B cell (primary cell): ENCODE measurements at regions of chr2 and their contacts with region 1.

Region 1: DNA sequence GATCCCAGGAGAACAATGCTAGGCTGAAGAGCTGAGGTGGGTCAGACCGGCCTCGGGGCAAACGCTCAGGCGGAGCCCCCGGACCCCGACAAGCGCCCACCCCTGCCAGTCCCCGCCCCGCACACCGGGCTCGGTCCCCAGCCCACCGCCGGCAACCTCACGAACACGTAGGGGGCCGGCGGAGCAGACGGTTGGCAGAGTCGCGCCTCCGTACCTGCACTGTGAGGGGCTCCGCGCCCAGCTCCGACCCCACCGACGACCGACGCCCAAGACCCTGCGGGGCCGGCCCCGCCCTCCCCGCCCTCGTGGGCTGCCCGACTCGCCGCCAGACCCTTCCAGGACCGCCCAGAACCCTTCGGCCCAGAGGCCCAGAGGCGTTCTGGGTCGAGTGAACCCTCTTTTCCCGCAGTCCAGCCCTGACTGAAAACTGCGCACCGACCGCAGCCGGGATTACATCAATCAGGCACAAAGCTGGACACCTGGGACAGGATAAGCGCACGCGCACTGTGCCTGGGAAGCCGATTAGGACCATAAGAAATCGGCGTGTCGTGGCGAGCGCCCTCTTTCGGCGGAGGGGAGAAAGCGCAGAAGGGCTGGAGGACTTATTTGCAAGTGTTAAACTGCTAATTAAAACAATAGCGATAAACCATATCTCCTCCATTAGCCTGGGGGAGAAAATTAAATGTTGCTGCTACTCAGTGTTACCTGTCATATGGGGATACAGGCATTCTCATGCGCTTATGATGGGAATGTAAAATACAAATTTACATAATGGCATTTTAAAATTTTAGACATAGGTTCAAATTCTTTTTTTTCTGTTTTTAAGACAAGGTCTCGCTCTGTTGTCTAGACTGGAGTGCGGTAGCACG is 11.7 kb upstream of the DCTN1 start:
- DNase-seq: peak; percentile 98
- ATAC-seq: peak; percentile 89
- H3K4me3 ChIP-seq: peak overlapping the region; percentile 71 to 88 (median 80)
- H3K4me3 Mint-ChIP-seq: peak overlapping the region; percentile 99
- H3K27ac ChIP-seq: peak overlapping the region; percentile 94 to 95
- H3K27ac Mint-ChIP-seq: peak overlapping the region; percentile 100
- H3K4me1 ChIP-seq: peaks cover 18 to 24% of the 10 kb centered on the region in 2 donors
- H3K4me1 Mint-ChIP-seq: peaks cover 16% of the 10 kb centered on the region
- H3K27me3 ChIP-seq: peaks cover 0 to 7% (median 0%) of the 10 kb centered on the region in 4 experiments
- H3K27me3 Mint-ChIP-seq: peaks cover 5% of the 10 kb centered on the region
- CTCF ChIP-seq: peak; percentile 98

Region 2: GRCh38 chr2:74198461-74199274 is 193.1 kb before region 1 on chr2 and contains the start of gene MTHFD2:
- CTCF ChIA-PET with region 1: no interaction called
- POLR2A ChIA-PET with region 1: no interaction called
- intact Hi-C with region 1: loop called (anchors 1 kb)
- DNase-seq: peak; percentile 94
- ATAC-seq: peak; percentile 87
- H3K4me3 ChIP-seq: peak within 1 kb of the TSS; percentile 30 to 79 (median 74)
- H3K4me3 Mint-ChIP-seq: peak within 1 kb of the TSS; percentile 98
- H3K27ac ChIP-seq: peak within 1 kb of the TSS; percentile 92 to 96
- H3K27ac Mint-ChIP-seq: peak within 1 kb of the TSS; percentile 99
- H3K4me1 ChIP-seq: peaks cover 14 to 23% of the 10 kb centered on the region in 2 donors
- H3K4me1 Mint-ChIP-seq: peaks cover 24% of the 10 kb centered on the region
- H3K27me3 ChIP-seq: no peaks in the 10 kb centered on the region
- H3K27me3 Mint-ChIP-seq: no peaks in the 10 kb centered on the region
- CTCF ChIP-seq: peak; percentile 93
- total RNA-seq, gene MTHFD2: 17.4 and 18.0 TPM in 2 replicates

Region 3: GRCh38 chr2:74414881-74415761 is 23.3 kb after region 1 on chr2:
- CTCF ChIA-PET with region 1: interaction called, 6 read pairs
- POLR2A ChIA-PET with region 1: interaction called, 6 read pairs
- intact Hi-C with region 1: loop called (anchors 1 kb)
- DNase-seq: peak; percentile 66
- ATAC-seq: peak; percentile 81
- H3K4me3 ChIP-seq: peak overlapping the region; percentile 16 to 67 (median 62)
- H3K4me3 Mint-ChIP-seq: peak overlapping the region; percentile 84
- H3K27ac ChIP-seq: peak overlapping the region; percentile 34 to 67
- H3K27ac Mint-ChIP-seq: peak overlapping the region; percentile 83
- H3K4me1 ChIP-seq: peaks cover 38 to 53% of the 10 kb centered on the region in 2 donors
- H3K4me1 Mint-ChIP-seq: peaks cover 45% of the 10 kb centered on the region
- H3K27me3 ChIP-seq: no peaks in the 10 kb centered on the region
- H3K27me3 Mint-ChIP-seq: no peaks in the 10 kb centered on the region
- CTCF ChIP-seq: peak; percentile 25

Region 4: DNA sequence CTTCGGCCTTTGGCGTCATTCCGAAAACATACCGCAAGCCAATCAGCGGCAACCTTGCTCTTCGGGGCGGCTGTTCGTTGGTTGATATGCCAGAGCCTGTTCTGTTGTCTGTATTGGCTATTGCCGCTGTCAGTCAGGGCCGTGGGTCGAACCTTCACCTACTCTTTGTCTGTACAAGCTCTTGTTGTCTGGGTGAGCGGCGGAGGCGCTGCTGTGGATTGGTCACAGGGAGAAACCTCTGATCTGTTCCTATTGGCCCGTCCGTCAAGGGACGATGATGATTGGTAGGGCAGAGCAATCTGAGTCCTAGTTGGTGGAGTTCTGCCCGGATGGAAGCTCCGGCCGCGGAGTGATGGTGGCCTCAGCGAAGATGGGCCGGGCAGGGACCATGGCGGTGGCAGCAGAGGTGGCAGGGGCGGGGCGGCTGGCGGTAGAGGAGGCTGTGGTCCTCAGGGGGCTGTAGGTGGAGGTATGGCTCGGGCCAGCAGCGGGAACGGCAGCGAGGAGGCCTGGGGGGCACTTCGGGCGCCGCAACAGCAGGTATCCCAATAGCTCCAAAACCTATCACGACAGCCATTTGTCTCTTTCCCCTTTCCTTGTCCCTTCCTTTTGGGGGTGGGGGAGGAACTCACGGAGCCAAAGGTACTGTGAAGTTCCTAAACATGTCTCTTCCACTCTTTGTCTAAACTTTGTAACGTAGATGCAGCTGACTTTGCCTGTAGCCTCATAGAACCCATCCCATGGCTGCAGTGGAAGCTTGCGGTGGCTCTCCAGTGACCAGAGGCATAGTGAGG is 66.5 kb after region 1 on chr2 and contains the start of gene WBP1:
- CTCF ChIA-PET with region 1: interaction called, 3 read pairs
- POLR2A ChIA-PET with region 1: interaction called, 3 read pairs
- intact Hi-C with region 1: loop called (anchors 1 kb)
- DNase-seq: peak; percentile 100
- ATAC-seq: peak; percentile 79
- H3K4me3 ChIP-seq: peak within 1 kb of the TSS; percentile 80 to 100 (median 93)
- H3K4me3 Mint-ChIP-seq: peak within 1 kb of the TSS; percentile 94
- H3K27ac ChIP-seq: peak within 1 kb of the TSS; percentile 97 to 100
- H3K27ac Mint-ChIP-seq: peak within 1 kb of the TSS; percentile 99
- H3K4me1 ChIP-seq: peaks cover 33 to 40% of the 10 kb centered on the region in 2 donors
- H3K4me1 Mint-ChIP-seq: peaks cover 56% of the 10 kb centered on the region
- H3K27me3 ChIP-seq: no peaks in the 10 kb centered on the region
- H3K27me3 Mint-ChIP-seq: no peaks in the 10 kb centered on the region
- CTCF ChIP-seq: no peak
- total RNA-seq, gene WBP1: 91.5 and 98.4 TPM in 2 replicates

Region 5: DNA sequence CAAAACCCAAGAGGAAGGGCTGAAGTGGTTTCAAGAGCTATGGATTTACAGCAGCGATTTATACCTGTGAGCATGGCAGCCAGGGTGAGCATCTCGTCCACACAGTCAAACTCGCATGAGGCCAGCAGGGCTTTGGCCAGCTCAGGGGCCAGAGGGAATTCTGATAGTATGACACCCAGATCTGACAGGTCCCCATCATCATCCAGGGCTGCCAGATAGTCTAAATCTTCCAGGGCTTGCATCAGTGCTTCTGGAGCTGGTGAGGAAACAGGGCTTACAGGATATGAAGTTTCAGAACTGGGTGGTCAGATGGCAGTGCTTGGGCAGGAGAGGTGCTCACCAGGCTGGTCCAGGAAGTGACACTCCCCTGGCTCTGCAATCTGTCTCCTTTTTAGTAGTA is 130.7 kb after region 1 on chr2:
- CTCF ChIA-PET with region 1: no interaction called
- POLR2A ChIA-PET with region 1: no interaction called
- intact Hi-C with region 1: no loop called
- DNase-seq: no peak
- ATAC-seq: no peak
- H3K4me3 ChIP-seq: no peak overlapping the region
- H3K4me3 Mint-ChIP-seq: no peak overlapping the region
- H3K27ac ChIP-seq: no peak overlapping the region
- H3K27ac Mint-ChIP-seq: no peak overlapping the region
- H3K4me1 ChIP-seq: peaks cover 16 to 22% of the 10 kb centered on the region in 2 donors
- H3K4me1 Mint-ChIP-seq: peaks cover 12% of the 10 kb centered on the region
- H3K27me3 ChIP-seq: peaks cover 0 to 33% (median 26%) of the 10 kb centered on the region in 4 experiments
- H3K27me3 Mint-ChIP-seq: peaks cover 31% of the 10 kb centered on the region
- CTCF ChIP-seq: no peak

Region 6: DNA sequence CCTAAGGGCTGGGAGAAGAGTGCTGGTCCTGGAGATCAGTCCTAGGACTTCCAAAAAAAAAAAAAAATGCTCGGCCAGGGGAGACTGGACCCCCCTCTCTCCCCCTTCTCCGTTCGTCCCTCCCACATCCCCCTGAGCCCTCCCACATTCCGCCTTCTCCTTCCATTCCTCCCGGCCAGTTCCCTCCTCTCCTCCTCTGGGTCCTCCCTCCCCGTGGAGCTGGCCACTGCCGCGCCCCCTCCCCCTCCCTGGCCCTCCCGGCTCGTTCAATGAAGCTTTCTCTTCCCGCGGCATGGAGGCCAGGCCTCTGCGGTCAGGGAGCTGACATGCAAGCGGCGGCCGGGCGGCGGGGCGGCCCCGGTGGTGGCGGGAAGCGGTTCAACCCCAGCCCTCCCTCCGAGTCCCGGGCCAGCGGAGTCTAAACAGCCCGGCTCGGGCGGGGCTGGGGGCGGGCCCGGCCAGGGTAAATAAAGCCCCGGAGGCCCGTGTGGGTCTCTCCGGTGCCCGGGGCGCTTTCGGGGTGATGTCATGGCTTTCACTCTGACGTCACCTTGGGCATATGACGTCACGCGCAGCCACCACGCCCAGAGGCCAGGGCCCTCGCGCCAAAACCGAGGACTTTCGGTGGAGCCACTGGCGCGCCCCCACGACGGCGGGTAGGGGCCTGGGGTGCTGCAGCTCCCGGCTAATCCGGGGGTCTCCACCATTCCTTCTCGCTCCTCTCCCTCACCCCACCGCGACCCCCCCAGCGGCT is 162.3 kb after region 1 on chr2 and contains the start of gene LOXL3:
- CTCF ChIA-PET with region 1: no interaction called
- POLR2A ChIA-PET with region 1: no interaction called
- intact Hi-C with region 1: loop called (anchors 10 kb)
- DNase-seq: peak; percentile 93
- ATAC-seq: peak; percentile 48
- H3K4me3 ChIP-seq: peak within 1 kb of the TSS; percentile 51 to 99 (median 84)
- H3K4me3 Mint-ChIP-seq: peak within 1 kb of the TSS; percentile 96
- H3K27ac ChIP-seq: peak within 1 kb of the TSS; percentile 64 to 76
- H3K27ac Mint-ChIP-seq: peak within 1 kb of the TSS; percentile 94
- H3K4me1 ChIP-seq: peaks cover 16 to 39% of the 10 kb centered on the region in 2 donors
- H3K4me1 Mint-ChIP-seq: peaks cover 24% of the 10 kb centered on the region
- H3K27me3 ChIP-seq: peaks cover 0 to 15% (median 8%) of the 10 kb centered on the region in 4 experiments
- H3K27me3 Mint-ChIP-seq: no peaks in the 10 kb centered on the region
- CTCF ChIP-seq: no peak
- total RNA-seq, gene LOXL3: 0.66 and 1.2 TPM in 2 replicates

Region 7: GRCh38 chr2:74887445-74887951 is 495.7 kb after region 1 on chr2:
- CTCF ChIA-PET with region 1: no interaction called
- POLR2A ChIA-PET with region 1: no interaction called
- intact Hi-C with region 1: no loop called
- DNase-seq: no peak
- ATAC-seq: no peak
- H3K4me3 ChIP-seq: no peak overlapping the region
- H3K4me3 Mint-ChIP-seq: no peak overlapping the region
- H3K27ac ChIP-seq: no peak overlapping the region
- H3K27ac Mint-ChIP-seq: no peak overlapping the region
- H3K4me1 ChIP-seq: no peaks in the 10 kb centered on the region
- H3K4me1 Mint-ChIP-seq: no peaks in the 10 kb centered on the region
- H3K27me3 ChIP-seq: no peaks in the 10 kb centered on the region
- H3K27me3 Mint-ChIP-seq: no peaks in the 10 kb centered on the region
- CTCF ChIP-seq: no peak